ENCODE measurements at regions of chr9 and their contacts with region 1.

Region 1: GRCh38 chr9:109579191-109579948 is 81.3 kb upstream of the PTPN3 start:
- DNase-seq: no peak
- H3K4me3 ChIP-seq: no peak overlapping the region
- H3K27ac ChIP-seq: no peak overlapping the region
- H3K4me1 ChIP-seq: no peaks in the 10 kb centered on the region
- H3K27me3 ChIP-seq: no peaks in the 10 kb centered on the region
- CTCF ChIP-seq: no peak
- EP300 ChIP-seq: no peak
- POLR2A ChIP-seq: no peak

Region 2: GRCh38 chr9:109887079-109887478 is 307.7 kb after region 1 on chr9:
- in situ Hi-C with region 1: no loop called
- intact Hi-C with region 1: loop called (anchors 5 kb)
- DNase-seq: no peak
- H3K4me3 ChIP-seq: no peak overlapping the region
- H3K27ac ChIP-seq: no peak overlapping the region
- H3K4me1 ChIP-seq: peaks cover 0 to 10% (median 3%) of the 10 kb centered on the region in 4 donors
- H3K27me3 ChIP-seq: no peaks in the 10 kb centered on the region
- CTCF ChIP-seq: no peak
- EP300 ChIP-seq: no peak
- POLR2A ChIP-seq: no peak